Ovary (tissue), 10 donors: ENCODE measurements at regions of chr5 and their contacts with region 1.

Region 1: DNA sequence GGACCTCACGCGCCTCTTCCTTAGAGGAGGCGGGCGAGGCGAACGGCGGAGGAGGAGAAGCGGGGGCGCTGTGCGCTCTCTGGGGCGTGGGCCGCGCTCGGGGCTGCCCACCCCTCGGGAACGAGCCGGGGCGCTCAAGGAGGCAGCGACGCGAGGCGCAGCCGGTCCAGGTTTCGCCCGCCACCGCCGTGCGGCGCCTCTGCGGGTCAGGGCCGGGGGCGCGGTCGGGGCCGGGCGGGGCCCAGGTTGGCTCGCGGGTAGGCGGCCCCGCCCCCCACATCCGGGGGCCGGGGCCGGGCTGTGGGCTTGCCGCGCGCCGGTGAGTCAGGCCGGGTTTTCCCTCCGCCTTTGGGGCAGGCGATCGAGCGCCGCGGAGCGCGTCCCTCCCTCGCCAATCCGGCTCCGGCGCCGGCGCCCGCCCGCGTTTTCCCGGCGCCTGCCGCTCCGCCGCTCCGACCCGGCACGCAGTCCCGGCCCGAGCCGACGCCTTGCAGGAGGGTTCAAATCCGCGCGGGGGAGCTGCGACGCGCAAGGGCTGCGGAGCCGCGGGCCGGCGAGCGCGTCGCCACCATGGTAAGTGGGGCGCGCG is at the start of gene N4BP3:
- DNase-seq: peak in 3 of 5 donors; percentile 31 to 64 (median 50)
- H3K4me3 ChIP-seq: peak within 1 kb of the TSS; percentile 28
- H3K27ac ChIP-seq: no peak within 1 kb of the TSS
- H3K4me1 ChIP-seq: no peaks in the 10 kb centered on the region
- H3K27me3 ChIP-seq: no peaks in the 10 kb centered on the region
- CTCF ChIP-seq: no peak
- EP300 ChIP-seq: no peak
- POLR2A ChIP-seq: no peak
- total RNA-seq, gene N4BP3: 0.40 to 1.8 (median 0.58) TPM

Region 2: GRCh38 chr5:178404987-178405386 is 291.7 kb after region 1 on chr5:
- intact Hi-C with region 1: loop called in 1 of 4 experiments (anchors 10 kb)
- DNase-seq: no peak
- H3K4me3 ChIP-seq: no peak overlapping the region
- H3K27ac ChIP-seq: no peak overlapping the region
- H3K4me1 ChIP-seq: no peaks in the 10 kb centered on the region
- H3K27me3 ChIP-seq: no peaks in the 10 kb centered on the region
- CTCF ChIP-seq: no peak
- EP300 ChIP-seq: no peak
- POLR2A ChIP-seq: no peak